ENCODE measurements at regions of chr1 and their contacts with region 1.

Region 1: GRCh38 chr1:94237291-94238226 is at the start of gene ARHGAP29:
- DNase-seq: no peak
- H3K4me3 ChIP-seq: peak within 1 kb of the TSS; percentile 77
- H3K27ac ChIP-seq: no peak within 1 kb of the TSS
- H3K27me3 ChIP-seq: no peaks in the 10 kb centered on the region
- CTCF ChIP-seq: no peak
- polyA plus RNA-seq, gene ARHGAP29: 21.3 and 30.4 TPM in 2 replicates

Region 2: DNA sequence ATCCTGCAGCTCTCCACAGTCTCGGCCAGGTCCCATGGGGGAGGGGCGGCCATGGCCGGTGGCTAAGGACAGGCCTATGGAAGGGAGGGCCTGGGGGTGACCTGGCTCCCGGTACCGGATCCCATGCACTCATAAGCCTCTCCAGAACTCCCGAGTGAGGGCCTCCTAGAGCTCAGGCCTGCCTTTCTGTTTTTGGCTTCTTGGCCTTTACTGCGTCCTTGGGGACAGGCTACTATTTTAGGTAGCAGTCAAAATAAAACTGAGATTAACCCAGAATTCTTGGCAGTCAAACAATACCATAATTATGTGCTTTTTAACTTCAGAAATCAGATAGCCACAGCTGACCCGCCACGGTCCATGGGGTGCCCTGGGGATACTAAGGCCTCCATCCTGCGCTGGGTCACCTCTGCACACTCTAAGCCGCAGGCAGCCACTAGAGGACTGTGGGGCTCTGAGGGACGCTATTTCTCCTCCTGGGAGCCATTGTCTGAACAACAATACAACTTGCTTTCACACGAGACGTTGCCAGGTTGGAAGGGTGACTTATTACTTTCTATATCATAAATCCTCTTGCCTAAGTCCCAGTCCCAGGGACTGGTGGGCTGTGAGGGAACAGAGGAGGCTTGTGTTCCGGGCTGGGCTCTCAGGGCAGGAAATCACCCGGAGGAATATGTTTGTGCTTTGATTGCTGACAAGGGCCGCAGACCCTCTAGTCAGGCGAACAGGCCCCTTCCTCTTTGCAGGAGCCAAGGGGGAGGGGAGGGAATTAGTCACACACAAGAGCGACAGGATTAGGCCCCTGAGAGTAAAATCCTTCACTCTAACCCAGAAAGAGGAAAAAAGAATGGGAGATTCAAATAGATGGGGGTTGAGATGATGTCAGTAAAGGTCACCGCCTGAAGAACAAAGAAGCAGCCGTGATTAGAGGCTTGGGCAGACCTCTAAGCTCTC is 515.2 kb before region 1 on chr1:
- CTCF ChIA-PET with region 1: no interaction called
- POLR2A ChIA-PET with region 1: no interaction called
- DNase-seq: no peak
- H3K4me3 ChIP-seq: no peak overlapping the region
- H3K27ac ChIP-seq: no peak overlapping the region
- H3K27me3 ChIP-seq: no peaks in the 10 kb centered on the region
- CTCF ChIP-seq: no peak

Region 3: DNA sequence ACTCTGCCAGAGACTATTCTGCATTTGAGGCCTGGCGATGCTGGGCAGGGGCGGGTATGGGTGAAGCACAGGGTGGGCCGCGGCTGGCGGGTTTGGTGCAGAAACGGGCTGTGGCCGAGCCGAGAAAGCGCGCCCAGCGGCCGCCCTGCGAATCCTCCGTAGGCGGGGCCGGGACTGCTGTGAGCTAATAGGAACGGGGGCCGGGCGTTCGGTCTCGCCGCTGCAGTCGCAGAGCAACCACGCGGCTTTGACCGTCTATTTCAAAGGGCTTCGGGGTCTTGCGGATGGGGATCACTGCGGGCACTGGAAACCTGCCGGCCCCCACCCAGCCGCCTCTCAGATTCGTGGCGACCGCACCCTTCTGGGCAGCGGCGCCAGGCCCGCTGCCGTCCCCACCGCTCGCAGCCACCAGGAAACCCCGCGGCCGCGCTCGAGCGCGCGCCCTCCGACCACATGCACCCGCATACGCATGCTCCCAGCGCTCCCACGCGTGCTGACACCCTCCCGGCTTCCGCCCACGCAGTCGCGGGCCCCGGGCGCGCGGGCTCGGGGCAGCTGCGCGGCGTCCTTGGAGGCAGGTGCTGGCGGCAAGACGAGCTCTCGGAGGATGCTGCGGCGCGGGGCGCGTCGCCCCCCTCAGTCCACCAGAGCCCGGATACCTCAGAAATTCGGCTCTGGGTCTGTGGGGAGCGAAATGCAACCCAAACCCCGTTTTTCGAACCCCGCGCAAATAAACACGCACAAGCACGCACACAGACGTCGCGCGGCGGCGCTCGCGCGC is 391.2 kb before region 1 on chr1:
- CTCF ChIA-PET with region 1: no interaction called
- POLR2A ChIA-PET with region 1: no interaction called
- DNase-seq: peak; percentile 49
- H3K4me3 ChIP-seq: peak overlapping the region; percentile 83
- H3K27ac ChIP-seq: peak overlapping the region; percentile 98
- H3K27me3 ChIP-seq: no peaks in the 10 kb centered on the region
- CTCF ChIP-seq: peak; percentile 45

Region 4: DNA sequence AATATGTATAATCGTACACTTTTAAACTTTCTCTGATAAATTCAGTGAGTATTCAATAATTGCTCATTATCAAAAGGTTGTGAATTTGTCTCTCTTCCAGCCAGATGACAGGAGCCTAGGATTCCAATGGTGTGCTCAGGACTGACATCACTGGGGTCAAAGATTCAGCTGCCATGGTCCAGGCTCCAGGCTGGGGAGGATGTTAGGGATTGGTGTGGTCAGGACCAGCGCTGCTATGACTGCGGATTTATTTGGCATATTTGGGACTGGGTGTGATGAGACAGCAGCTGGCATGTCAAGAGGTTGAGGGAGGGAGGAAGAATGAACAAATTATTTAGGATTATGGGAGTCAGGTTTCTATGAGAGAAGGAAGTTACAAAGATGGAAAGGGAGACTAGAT is 68.4 kb before region 1 on chr1:
- CTCF ChIA-PET with region 1: interaction called, 10 read pairs
- POLR2A ChIA-PET with region 1: no interaction called
- DNase-seq: no peak
- H3K4me3 ChIP-seq: no peak overlapping the region
- H3K27ac ChIP-seq: no peak overlapping the region
- H3K27me3 ChIP-seq: no peaks in the 10 kb centered on the region
- CTCF ChIP-seq: no peak

Region 5: GRCh38 chr1:94258873-94259331 is 21.3 kb after region 1 on chr1:
- CTCF ChIA-PET with region 1: interaction called, 10 read pairs
- POLR2A ChIA-PET with region 1: no interaction called
- DNase-seq: peak; percentile 46
- H3K4me3 ChIP-seq: no peak overlapping the region
- H3K27ac ChIP-seq: no peak overlapping the region
- H3K27me3 ChIP-seq: no peaks in the 10 kb centered on the region
- CTCF ChIP-seq: no peak

Region 6: DNA sequence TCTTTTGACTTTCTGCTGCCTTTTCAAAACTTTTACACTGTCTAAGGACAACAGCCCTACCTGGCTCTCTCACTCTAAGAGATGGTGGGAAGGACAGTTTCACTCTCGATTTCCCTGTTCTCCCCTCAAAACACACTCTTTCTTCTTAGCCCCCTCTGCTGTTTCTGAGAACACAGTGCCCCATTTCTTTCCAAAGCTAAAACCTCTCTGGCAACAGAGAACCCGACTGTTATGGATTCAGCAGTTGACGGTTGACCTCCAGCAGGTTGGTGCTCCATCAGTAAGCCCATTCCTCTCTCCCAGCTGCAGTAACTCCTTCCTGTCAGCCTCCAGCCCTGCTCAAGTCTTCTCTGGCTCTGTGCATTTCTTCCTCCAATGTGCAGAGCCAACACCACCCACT is 92.4 kb after region 1 on chr1:
- CTCF ChIA-PET with region 1: interaction called, 20 read pairs
- POLR2A ChIA-PET with region 1: interaction called, 11 read pairs
- DNase-seq: no peak
- H3K4me3 ChIP-seq: no peak overlapping the region
- H3K27ac ChIP-seq: no peak overlapping the region
- H3K27me3 ChIP-seq: no peaks in the 10 kb centered on the region
- CTCF ChIP-seq: peak; percentile 68

Measured in AG04450 (cell line).